ENCODE measurements at regions of chr13 and their contacts with region 1.

Region 1: DNA sequence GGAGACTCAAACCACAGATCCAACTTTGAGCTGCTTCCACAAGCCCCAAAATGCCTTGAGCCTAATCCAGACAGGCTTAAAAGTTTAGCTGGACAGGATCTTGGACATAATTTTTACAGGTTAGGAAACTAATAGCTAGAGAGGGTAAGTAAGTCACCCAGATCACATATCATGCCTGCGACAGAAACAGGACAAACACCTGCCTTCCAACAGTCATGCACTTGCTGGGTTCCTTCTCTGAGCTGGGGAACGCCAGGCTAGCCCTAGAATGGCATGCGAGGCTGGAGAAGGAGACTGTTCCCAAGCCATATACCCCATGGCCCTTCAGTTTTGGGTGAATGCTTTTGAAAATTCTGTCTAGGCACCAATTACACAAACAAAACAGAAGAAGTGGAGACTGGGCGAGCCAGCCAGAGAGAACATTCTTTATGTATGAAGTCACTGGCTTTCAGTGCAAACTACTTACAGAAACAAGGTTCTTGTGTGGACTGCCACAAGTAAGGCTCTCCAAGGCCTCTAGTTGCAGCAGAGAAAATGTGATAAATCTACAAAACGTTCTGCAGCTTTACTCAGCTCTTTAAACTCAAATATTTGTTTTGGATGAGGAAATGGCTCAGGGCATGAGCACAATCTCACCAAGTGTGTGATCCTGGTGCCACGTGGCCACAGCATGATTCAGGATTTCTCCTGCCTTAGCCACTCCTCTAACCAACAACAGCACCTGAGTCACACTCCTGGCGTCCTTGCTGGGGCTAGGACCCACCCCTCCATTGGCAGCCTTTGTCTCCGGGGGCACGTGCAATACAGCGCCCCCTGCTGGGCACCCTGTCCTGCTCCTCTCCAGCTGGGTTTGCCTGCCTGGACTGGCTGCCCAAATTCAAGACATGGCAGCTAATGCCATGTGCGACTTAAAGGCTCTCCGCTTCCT is 73.4 kb upstream of the UBL3 start:
- DNase-seq: peak; percentile 93
- ATAC-seq: peak; percentile 91
- H3K4me3 ChIP-seq: no peak overlapping the region
- H3K27ac ChIP-seq: peak overlapping the region; percentile 78
- H3K4me1 ChIP-seq: peaks cover 45 to 68% of the 10 kb centered on the region in 2 experiments
- H3K27me3 ChIP-seq: no peaks in the 10 kb centered on the region
- CTCF ChIP-seq: peak in 2 of 3 experiments; percentile 97 to 99; a peak in 5 of 6 replicates
- POLR2A ChIP-seq: no peak
- RAD21 ChIP-seq: peak; percentile 60

Region 2: DNA sequence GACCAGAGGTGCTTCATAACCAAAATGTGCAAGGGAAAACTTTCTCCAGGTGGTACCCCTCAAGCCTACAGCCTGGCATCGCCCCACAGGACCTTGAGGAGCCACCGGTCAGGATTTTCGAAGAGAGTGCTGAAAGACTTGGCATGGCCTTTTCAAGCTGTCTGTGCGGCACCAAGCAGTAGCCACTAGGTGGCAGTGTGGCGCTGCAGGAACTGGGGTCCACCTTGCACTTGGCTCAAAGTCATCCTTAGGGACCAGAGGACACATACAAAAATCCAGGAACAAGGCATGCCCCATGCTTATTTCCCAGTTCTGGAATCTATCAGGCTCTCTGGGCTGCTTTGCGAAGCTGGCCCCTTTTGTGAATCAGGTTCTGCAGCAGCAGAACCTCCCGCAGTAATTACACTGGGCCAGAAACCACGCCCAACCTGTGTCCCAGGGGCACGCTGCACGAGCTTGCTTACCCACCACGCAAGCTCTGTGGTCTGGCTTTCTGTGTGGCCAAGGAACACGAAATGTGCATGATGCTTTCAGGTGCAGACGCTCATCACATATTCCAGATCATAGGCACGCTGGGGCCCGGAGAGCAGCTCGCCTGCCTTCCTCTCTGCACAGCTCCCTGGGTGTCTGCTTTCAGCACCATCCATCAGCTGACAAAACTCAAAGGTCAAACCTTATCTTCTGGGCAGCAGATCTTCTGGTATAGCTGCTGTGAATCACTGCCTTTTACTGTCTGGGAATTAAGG is 415.5 kb before region 1 on chr13:
- CTCF ChIA-PET with region 1: no interaction called
- POLR2A ChIA-PET with region 1: no interaction called
- RAD21 ChIA-PET with region 1: no interaction called
- intact Hi-C with region 1: loop called (anchors 1 kb)
- DNase-seq: peak; percentile 24
- ATAC-seq: peak; percentile 92
- H3K4me3 ChIP-seq: no peak overlapping the region
- H3K27ac ChIP-seq: no peak overlapping the region
- H3K4me1 ChIP-seq: no peaks in the 10 kb centered on the region
- H3K27me3 ChIP-seq: no peaks in the 10 kb centered on the region
- CTCF ChIP-seq: peak; percentile 45 to 98 (median 97); a peak in 5 of 6 replicates
- POLR2A ChIP-seq: no peak
- RAD21 ChIP-seq: peak; percentile 82

Region 3: GRCh38 chr13:29771247-29771646 is 152.6 kb before region 1 on chr13:
- CTCF ChIA-PET with region 1: interaction called, 13 read pairs
- POLR2A ChIA-PET with region 1: no interaction called
- RAD21 ChIA-PET with region 1: interaction called, 3 read pairs
- intact Hi-C with region 1: loop called (anchors 5 kb)
- DNase-seq: peak; percentile 37
- ATAC-seq: 0 out of 2 replicates have a peak, but pooled peaks have one; percentile 59
- H3K4me3 ChIP-seq: no peak overlapping the region
- H3K27ac ChIP-seq: no peak overlapping the region
- H3K4me1 ChIP-seq: no peaks in the 10 kb centered on the region
- H3K27me3 ChIP-seq: no peaks in the 10 kb centered on the region
- CTCF ChIP-seq: peak; percentile 36 to 63 (median 56); a peak in 4 of 6 replicates
- POLR2A ChIP-seq: no peak
- RAD21 ChIP-seq: peak; percentile 69

Region 4: GRCh38 chr13:29850224-29850898 is 73.5 kb before region 1 on chr13 and contains the start of gene UBL3:
- CTCF ChIA-PET with region 1: interaction called, 14 read pairs
- POLR2A ChIA-PET with region 1: interaction called, 5 read pairs
- RAD21 ChIA-PET with region 1: interaction called, 4 to 5 read pairs
- intact Hi-C with region 1: loop called (anchors 1 kb)
- DNase-seq: peak; percentile 85
- ATAC-seq: peak; percentile 88
- H3K4me3 ChIP-seq: peak within 1 kb of the TSS; percentile 69 to 74
- H3K27ac ChIP-seq: peak within 1 kb of the TSS; percentile 82
- H3K4me1 ChIP-seq: peaks cover 0 to 12% of the 10 kb centered on the region in 2 experiments; a peak in 3 of 4 replicates
- H3K27me3 ChIP-seq: no peaks in the 10 kb centered on the region
- CTCF ChIP-seq: no peak
- POLR2A ChIP-seq: peak; percentile 29
- RAD21 ChIP-seq: no peak
- total RNA-seq, gene UBL3: 10.7 TPM

Region 5: DNA sequence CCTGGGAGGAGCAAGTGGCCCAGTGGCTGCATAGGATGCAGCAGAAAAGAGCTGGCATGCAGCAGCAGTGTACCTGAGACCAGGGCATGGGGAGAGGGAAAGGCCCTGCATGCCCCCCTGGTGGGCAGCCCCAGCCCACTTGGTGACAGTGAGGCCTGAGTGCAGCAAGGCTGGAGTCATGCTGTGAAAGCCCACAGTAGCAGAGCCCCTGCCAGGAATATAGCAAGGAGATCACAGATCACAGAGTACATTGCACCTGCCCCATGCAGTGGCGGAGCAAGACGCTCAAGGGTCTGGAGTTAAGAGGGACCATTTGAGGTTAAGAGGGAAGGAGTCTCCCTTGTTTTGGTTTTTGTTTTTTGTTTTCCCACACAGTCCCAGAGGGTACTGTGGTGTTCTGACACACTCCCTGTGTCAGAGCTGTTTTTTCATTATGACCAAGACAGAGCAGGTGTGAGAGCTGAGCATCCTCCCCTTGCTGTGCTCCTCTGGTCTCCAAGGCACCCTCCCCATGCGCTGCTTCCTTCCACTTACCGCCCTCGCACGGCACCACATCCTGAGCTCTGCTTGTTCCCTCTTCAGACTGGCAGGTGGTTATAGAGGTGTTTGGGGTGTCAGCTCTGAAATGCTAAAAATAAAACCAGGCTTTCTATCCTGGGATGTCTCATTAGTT is 11.6 kb after region 1 on chr13:
- CTCF ChIA-PET with region 1: interaction called, 15 read pairs
- POLR2A ChIA-PET with region 1: no interaction called
- RAD21 ChIA-PET with region 1: no interaction called
- intact Hi-C with region 1: no loop called
- DNase-seq: no peak
- ATAC-seq: no peak
- H3K4me3 ChIP-seq: no peak overlapping the region
- H3K27ac ChIP-seq: no peak overlapping the region
- H3K4me1 ChIP-seq: no peaks in the 10 kb centered on the region
- H3K27me3 ChIP-seq: no peaks in the 10 kb centered on the region
- CTCF ChIP-seq: no peak
- POLR2A ChIP-seq: no peak
- RAD21 ChIP-seq: no peak

Region 6: GRCh38 chr13:30114571-30115256 is 190.9 kb after region 1 on chr13:
- CTCF ChIA-PET with region 1: no interaction called
- POLR2A ChIA-PET with region 1: no interaction called
- RAD21 ChIA-PET with region 1: no interaction called
- intact Hi-C with region 1: loop called (anchors 10 kb)
- DNase-seq: peak; percentile 72
- ATAC-seq: peak; percentile 93
- H3K4me3 ChIP-seq: peak overlapping the region; percentile 44 to 54
- H3K27ac ChIP-seq: peak overlapping the region; percentile 59; the same call in 1 of the 2 replicates
- H3K4me1 ChIP-seq: peaks cover 12 to 25% of the 10 kb centered on the region in 2 experiments
- H3K27me3 ChIP-seq: no peaks in the 10 kb centered on the region; the same call in 1 of the 2 replicates
- CTCF ChIP-seq: peak; percentile 87 to 94 (median 91)
- POLR2A ChIP-seq: peak; percentile 75
- RAD21 ChIP-seq: peak; percentile 85